ENCODE measurements at regions of chr2 and their contacts with region 1.

Region 1: GRCh38 chr2:209423562-209424198 is at the start of gene MAP2:
- DNase-seq: peak; percentile 88
- H3K4me3 ChIP-seq: peak within 1 kb of the TSS; percentile 77 to 95 (median 85)
- H3K27ac ChIP-seq: peak within 1 kb of the TSS; percentile 51
- H3K4me1 ChIP-seq: peaks cover 12% of the 10 kb centered on the region
- H3K27me3 ChIP-seq: peaks cover 0 to 2% of the 10 kb centered on the region in 2 experiments
- CTCF ChIP-seq: peak; percentile 86 to 91
- POLR2A ChIP-seq: peak; percentile 33
- total RNA-seq, gene MAP2: 46.1 and 61.2 TPM in 2 replicates

Region 2: GRCh38 chr2:208392300-208393080 is 1031.2 kb before region 1 on chr2:
- CTCF ChIA-PET with region 1: interaction called, 11 read pairs
- POLR2A ChIA-PET with region 1: no interaction called
- dilution Hi-C with region 1: no loop called
- intact Hi-C with region 1: loop called (anchors 1 kb)
- DNase-seq: no peak
- H3K4me3 ChIP-seq: no peak overlapping the region
- H3K27ac ChIP-seq: no peak overlapping the region
- H3K4me1 ChIP-seq: no peaks in the 10 kb centered on the region
- H3K27me3 ChIP-seq: no peaks in the 10 kb centered on the region
- CTCF ChIP-seq: peak in 1 of 2 donors; percentile 4
- POLR2A ChIP-seq: no peak

Region 3: DNA sequence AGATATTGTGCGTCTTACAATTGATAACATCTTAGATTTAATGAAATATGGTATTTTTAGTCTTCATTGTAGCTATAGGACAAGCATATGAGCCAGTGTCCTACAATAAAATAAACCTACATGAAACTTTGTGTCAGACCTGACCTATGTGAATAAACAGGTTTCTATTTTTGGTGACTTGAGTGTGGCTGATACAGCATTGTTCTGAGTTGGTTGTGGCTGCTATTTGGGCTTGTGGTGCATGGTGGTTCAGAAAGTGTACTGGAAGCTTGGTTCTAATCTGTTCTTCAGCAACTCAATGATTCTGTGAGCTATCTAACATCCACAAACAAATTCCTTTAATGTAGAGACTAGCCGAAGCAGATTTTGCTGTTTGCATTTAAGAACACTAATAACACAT is 64.7 kb before region 1 on chr2:
- CTCF ChIA-PET with region 1: interaction called, 11 read pairs
- POLR2A ChIA-PET with region 1: no interaction called
- dilution Hi-C with region 1: no loop called
- intact Hi-C with region 1: no loop called
- DNase-seq: no peak
- H3K4me3 ChIP-seq: no peak overlapping the region
- H3K27ac ChIP-seq: no peak overlapping the region
- H3K4me1 ChIP-seq: no peaks in the 10 kb centered on the region
- H3K27me3 ChIP-seq: no peaks in the 10 kb centered on the region
- CTCF ChIP-seq: no peak
- POLR2A ChIP-seq: no peak

Region 4: DNA sequence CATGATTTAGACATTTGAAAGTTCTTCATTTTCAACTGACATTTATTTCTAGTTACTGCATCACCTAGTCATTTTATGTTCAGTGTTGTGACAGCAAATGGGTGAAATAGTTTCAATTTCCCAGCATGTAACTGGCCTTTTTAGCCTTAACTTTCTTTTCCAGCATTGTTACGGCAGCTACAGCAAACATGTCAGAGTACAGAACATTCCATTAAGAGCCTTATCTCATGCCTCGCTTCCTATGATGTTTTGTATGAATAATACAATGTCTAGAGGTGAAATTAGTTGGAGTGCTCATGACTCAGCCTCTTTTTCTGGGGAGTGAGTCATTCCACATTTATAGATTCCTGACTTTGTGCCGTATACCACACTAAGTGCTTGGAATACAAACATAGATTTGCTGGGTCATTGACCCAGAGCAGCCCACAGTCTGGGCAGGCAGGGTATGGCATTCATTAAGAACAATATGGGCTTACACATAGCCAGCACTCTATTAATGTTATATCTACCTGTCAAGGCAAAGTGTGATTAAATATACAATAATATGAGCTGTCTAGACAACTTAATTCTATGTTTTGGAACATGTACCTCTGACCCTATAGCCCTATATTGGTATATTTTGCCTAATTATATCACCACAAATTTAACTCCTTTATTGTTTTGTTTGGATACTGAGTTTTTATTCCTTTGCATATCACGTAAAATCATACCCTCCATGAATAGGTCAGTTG is 72.3 kb after region 1 on chr2:
- CTCF ChIA-PET with region 1: interaction called, 34 read pairs
- POLR2A ChIA-PET with region 1: interaction called, 3 read pairs
- dilution Hi-C with region 1: no loop called
- intact Hi-C with region 1: loop called (anchors 1 kb)
- DNase-seq: peak; percentile 99
- H3K4me3 ChIP-seq: peak overlapping the region in 1 of 3 experiments; percentile 52
- H3K27ac ChIP-seq: peak overlapping the region; percentile 100
- H3K4me1 ChIP-seq: peaks cover 30% of the 10 kb centered on the region
- H3K27me3 ChIP-seq: no peaks in the 10 kb centered on the region
- CTCF ChIP-seq: no peak
- POLR2A ChIP-seq: peak; percentile 46

Region 5: DNA sequence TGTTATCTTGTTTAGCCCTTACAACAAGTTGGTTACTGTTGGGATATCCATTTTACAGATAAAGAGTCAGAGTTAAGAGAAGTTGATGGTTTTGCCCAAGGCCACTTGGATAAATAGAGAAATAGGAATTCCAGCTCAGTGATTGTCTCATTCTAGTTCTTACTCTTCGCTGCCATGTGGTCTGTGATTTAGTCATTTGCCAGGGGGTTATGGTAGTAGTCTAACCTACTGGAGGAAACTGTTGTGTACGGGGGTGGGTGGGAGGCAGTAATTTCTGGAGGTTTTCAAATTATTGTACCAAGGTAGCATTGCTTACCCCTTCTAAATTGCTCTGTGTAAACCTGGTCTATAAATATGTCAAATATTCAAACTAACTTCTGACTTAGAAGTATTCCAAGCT is 110.5 kb after region 1 on chr2:
- CTCF ChIA-PET with region 1: interaction called, 17 read pairs
- POLR2A ChIA-PET with region 1: no interaction called
- dilution Hi-C with region 1: no loop called
- intact Hi-C with region 1: no loop called
- DNase-seq: no peak
- H3K4me3 ChIP-seq: no peak overlapping the region
- H3K27ac ChIP-seq: no peak overlapping the region
- H3K4me1 ChIP-seq: no peaks in the 10 kb centered on the region
- H3K27me3 ChIP-seq: no peaks in the 10 kb centered on the region
- CTCF ChIP-seq: no peak
- POLR2A ChIP-seq: no peak

Region 6: DNA sequence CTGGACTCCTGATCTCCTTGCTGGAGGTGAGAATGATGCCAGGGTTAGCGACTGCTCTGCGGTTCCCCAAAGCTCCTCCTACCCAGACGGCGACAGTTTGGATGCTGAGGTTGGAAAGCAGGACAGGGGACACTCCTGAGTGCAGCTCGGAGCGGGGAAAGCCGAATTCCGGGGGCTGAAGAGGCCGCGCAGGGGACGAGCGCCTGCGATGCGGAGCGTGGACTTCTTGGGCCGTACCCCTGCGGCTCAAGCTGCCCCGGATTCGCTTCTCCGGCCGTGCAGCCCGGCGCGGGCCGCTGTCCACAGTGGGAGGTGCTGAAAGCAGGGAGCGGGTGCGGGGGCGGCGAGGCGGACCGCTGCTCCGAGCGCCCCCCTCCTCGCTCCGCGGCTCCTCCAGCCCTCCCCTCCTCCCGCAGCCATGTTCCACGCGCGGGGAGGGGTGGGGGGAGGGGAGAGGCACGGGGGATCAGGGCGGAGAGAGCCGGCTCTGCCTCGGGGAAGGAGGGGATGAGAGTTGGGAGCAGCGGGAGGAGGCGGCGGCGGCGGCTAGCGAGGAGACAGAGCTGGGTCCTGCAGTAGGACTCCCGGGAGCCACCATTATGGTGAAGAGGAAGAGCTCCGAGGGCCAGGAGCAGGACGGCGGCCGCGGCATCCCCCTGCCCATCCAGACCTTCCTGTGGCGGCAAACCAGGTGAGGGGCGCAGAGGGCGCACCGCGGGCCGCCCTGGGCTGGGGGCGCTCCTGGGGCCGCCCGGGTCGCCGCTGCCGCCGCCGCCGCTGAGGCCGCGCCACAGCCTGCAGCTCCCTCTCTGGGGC is 348.0 kb after region 1 on chr2 and contains the start of gene UNC80:
- CTCF ChIA-PET with region 1: interaction called, 11 read pairs
- POLR2A ChIA-PET with region 1: no interaction called
- dilution Hi-C with region 1: no loop called
- intact Hi-C with region 1: no loop called
- DNase-seq: peak; percentile 62
- H3K4me3 ChIP-seq: peak within 1 kb of the TSS in 2 of 3 experiments; percentile 11 to 17
- H3K27ac ChIP-seq: no peak within 1 kb of the TSS
- H3K4me1 ChIP-seq: peaks cover 3% of the 10 kb centered on the region
- H3K27me3 ChIP-seq: peaks cover 4 to 11% of the 10 kb centered on the region in 2 experiments
- CTCF ChIP-seq: no peak
- POLR2A ChIP-seq: no peak
- total RNA-seq, gene UNC80: not detected in 2 replicates